ENCODE measurements at regions of chr3 and their contacts with region 1.

Region 1: DNA sequence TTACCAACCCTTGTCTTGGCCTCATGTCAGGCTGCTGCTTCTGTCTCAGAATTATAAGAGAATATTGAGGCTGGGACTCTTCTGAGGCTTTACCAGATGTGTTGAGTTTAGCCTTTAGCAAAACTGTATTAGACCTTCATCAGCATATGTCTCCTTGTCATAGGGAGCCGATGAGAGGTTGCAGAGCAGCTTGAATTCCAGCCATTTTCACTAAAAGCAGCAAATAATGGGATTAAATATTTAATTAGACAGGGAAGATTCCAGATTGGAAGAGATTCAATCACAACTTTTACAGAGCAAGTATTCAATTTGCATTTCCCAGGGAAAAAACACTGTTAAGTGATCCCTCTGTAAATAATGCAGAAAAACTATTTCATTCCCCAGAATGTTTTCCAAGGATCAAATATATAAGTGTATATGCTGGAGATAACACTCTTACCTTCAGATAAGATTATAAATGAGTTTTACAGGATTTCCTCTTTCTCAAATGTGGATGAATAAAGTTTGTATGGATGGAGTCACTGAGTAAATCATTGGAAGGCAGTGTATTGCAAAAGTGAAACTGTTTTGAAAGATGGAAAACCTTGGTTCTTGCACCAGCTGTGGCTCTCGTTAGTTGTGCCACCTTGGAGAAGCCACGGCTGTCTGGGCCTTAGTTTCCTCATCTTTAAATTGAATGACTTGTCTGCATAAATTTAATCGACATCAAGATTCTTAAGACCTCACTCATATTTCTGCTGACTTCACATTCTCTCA is 466.4 kb upstream of the SGO1 start:
- DNase-seq: no peak
- ATAC-seq: no peak
- H3K4me3 ChIP-seq: no peak overlapping the region
- H3K27ac ChIP-seq: no peak overlapping the region
- H3K4me1 ChIP-seq: no peaks in the 10 kb centered on the region
- H3K27me3 ChIP-seq: no peaks in the 10 kb centered on the region
- CTCF ChIP-seq: no peak
- EP300 ChIP-seq: no peak
- POLR2A ChIP-seq: no peak
- RAD21 ChIP-seq: no peak

Region 2: GRCh38 chr3:20225769-20226168 is 426.6 kb before region 1 on chr3:
- CTCF ChIA-PET with region 1: no interaction called
- POLR2A ChIA-PET with region 1: no interaction called
- RAD21 ChIA-PET with region 1: no interaction called
- SMC1A ChIA-PET with region 1: no interaction called
- in situ Hi-C with region 1: no loop called
- intact Hi-C with region 1: loop called (anchors 10 kb)
- DNase-seq: no peak
- ATAC-seq: peak; percentile 66
- H3K4me3 ChIP-seq: no peak overlapping the region
- H3K27ac ChIP-seq: no peak overlapping the region
- H3K4me1 ChIP-seq: no peaks in the 10 kb centered on the region
- H3K27me3 ChIP-seq: no peaks in the 10 kb centered on the region
- CTCF ChIP-seq: peak; percentile 25 to 52 (median 40); a peak in 4 of 6 replicates
- EP300 ChIP-seq: no peak
- POLR2A ChIP-seq: no peak
- RAD21 ChIP-seq: peak; percentile 73

Region 3: GRCh38 chr3:20700714-20701113 is 48.3 kb after region 1 on chr3:
- CTCF ChIA-PET with region 1: no interaction called
- POLR2A ChIA-PET with region 1: no interaction called
- RAD21 ChIA-PET with region 1: no interaction called
- SMC1A ChIA-PET with region 1: no interaction called
- in situ Hi-C with region 1: no loop called
- intact Hi-C with region 1: no loop called
- DNase-seq: no peak
- ATAC-seq: no peak
- H3K4me3 ChIP-seq: no peak overlapping the region
- H3K27ac ChIP-seq: no peak overlapping the region
- H3K4me1 ChIP-seq: no peaks in the 10 kb centered on the region
- H3K27me3 ChIP-seq: no peaks in the 10 kb centered on the region
- CTCF ChIP-seq: no peak
- EP300 ChIP-seq: no peak
- POLR2A ChIP-seq: no peak
- RAD21 ChIP-seq: no peak